CD4-positive, alpha-beta memory T cell (primary cell): ENCODE measurements at regions of chr15 and their contacts with region 1.

Region 1: DNA sequence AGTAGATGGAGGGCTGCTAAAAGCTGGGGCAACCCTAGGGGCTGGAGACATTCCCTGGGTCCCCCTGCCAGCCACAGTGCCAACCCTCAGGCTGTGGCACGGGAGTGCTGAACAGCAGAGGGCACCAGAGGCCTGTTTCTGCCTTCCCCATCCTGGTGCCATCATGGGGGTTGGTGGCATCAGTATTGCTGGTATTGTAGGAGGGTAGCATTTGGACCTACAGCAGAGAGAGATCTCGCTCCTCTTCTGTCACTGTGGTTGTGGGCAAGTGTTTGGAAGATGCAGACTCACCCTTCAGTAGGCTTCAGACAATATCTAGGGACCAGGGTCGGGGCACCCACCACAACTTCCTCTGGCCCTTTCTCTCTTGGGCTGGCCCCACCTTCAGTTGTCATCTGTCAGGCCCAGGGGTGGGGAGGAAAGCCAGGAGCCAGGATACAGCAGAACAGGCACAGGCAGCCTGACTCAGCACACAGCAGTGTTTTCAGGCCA is 123.5 kb downstream of the RPLP1 start:
- DNase-seq: peak; percentile 59 to 64 (median 61)
- H3K4me3 ChIP-seq: no peak overlapping the region
- H3K4me3 Mint-ChIP-seq: peak overlapping the region in 1 of 8 donors; percentile 37
- H3K27ac ChIP-seq: no peak overlapping the region
- H3K27ac Mint-ChIP-seq: peak overlapping the region in 2 of 7 donors; percentile 25 to 38
- H3K4me1 ChIP-seq: peaks cover 35% of the 10 kb centered on the region
- H3K4me1 Mint-ChIP-seq: peaks cover 18 to 41% (median 33%) of the 10 kb centered on the region in 4 donors
- H3K27me3 ChIP-seq: no peaks in the 10 kb centered on the region
- H3K27me3 Mint-ChIP-seq: peaks cover 0 to 1% of the 10 kb centered on the region in 2 donors

Region 2: DNA sequence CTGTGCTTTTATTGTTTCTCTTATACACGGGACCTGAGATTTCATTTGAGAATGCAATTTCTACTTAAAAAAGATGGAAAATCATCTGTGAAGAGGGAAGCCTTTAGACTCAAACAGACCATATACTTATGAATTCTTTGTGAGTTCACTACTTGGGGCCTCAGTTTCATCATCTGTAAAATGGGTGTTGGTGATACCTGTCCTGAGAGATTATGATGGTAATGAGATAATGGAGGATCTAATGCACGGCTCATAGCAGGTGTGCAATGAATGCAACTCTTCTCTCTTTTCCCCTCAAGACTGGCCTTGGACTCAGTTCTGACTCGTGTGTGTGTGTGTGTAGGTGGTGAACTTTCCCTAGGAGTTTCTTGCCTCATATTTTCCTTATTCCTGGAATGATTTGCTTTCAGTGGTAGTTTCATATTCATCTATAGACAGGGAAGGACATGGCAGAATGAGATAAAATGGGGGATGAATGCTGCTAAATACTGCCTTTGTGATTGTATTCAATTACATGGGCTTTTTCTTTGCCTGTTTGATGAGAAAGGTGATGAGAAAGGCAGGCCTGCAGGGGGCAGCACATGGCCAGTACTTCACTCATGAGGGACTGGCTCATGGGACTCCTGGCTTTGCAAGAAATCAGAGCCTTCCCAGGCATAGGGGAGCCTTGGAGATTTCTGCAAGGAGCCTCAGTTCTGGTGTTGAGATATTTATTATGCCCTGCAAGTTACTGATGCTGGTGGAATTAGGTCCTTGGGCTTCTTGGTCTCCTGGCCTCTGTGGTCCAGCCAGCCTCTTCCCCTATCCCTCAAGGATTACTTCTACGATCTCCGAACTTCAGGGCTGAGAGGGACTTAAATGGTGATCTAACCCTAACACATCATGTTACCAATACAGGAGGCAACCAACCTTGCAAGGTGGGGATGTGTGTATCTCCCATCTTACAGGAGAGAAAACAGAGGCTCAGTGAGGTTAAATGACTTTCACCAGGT is 52.8 kb before region 1 on chr15:
- CTCF ChIA-PET with region 1: no interaction called
- POLR2A ChIA-PET with region 1: no interaction called
- intact Hi-C with region 1: no loop called
- DNase-seq: peak; percentile 38 to 63 (median 53)
- H3K4me3 ChIP-seq: no peak overlapping the region
- H3K4me3 Mint-ChIP-seq: no peak overlapping the region
- H3K27ac ChIP-seq: no peak overlapping the region
- H3K27ac Mint-ChIP-seq: peak overlapping the region in 1 of 7 donors; percentile 33
- H3K4me1 ChIP-seq: no peaks in the 10 kb centered on the region
- H3K4me1 Mint-ChIP-seq: no peaks in the 10 kb centered on the region
- H3K27me3 ChIP-seq: no peaks in the 10 kb centered on the region
- H3K27me3 Mint-ChIP-seq: peaks cover 3 to 5% of the 10 kb centered on the region in 2 donors

Region 3: DNA sequence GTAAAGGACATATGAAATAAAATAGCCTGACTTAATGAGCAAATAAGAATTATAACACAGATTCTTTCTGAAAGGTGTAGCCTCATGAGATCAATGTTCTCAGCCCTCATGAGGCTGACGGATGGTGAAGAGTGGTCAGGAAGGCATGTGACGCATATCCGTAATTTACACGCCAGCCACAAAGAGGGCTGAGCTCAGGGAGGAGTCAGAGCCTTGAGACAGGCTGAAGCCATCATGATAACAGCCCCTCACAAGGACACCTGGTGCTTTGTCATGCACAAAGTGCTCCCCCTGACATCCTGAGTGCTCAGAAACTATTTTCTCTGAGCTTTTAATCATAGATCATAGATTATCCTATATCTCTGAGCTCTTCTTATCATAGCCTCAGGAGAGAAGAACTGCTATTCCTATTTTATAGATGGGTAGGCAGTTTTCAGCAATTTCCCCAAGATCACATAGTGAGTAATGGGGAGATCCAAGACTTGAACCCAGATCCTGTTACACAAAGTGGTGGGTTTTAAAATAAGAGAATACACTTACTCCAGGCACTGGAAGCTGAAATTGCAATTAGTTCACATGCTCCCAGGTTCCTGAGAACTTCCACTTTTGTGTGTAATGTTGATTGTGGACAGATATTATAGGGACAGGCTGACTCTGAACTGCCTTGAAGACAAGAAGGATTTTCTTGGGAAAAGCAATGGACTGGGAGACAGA is 143.6 kb after region 1 on chr15:
- CTCF ChIA-PET with region 1: interaction called, 10 read pairs
- POLR2A ChIA-PET with region 1: interaction called, 4 read pairs
- intact Hi-C with region 1: loop called (anchors 2 kb)
- DNase-seq: peak; percentile 68 to 89 (median 78)
- H3K4me3 ChIP-seq: no peak overlapping the region
- H3K4me3 Mint-ChIP-seq: peak overlapping the region in 7 of 8 donors; percentile 18 to 94 (median 51)
- H3K27ac ChIP-seq: peak overlapping the region; percentile 39
- H3K27ac Mint-ChIP-seq: peak overlapping the region; percentile 93 to 97 (median 95)
- H3K4me1 ChIP-seq: peaks cover 96% of the 10 kb centered on the region
- H3K4me1 Mint-ChIP-seq: peaks cover 62 to 92% (median 81%) of the 10 kb centered on the region in 4 donors
- H3K27me3 ChIP-seq: no peaks in the 10 kb centered on the region
- H3K27me3 Mint-ChIP-seq: peaks cover 0 to 1% of the 10 kb centered on the region in 2 donors

Region 4: GRCh38 chr15:70091726-70092463 is 515.8 kb after region 1 on chr15:
- CTCF ChIA-PET with region 1: interaction called, 7 read pairs
- POLR2A ChIA-PET with region 1: interaction called, 4 read pairs
- intact Hi-C with region 1: loop called (anchors 1 kb)
- DNase-seq: peak in 3 of 5 donors; percentile 16 to 55 (median 19)
- H3K4me3 ChIP-seq: no peak overlapping the region
- H3K4me3 Mint-ChIP-seq: peak overlapping the region in 6 of 8 donors; percentile 39 to 87 (median 74)
- H3K27ac ChIP-seq: no peak overlapping the region
- H3K27ac Mint-ChIP-seq: peak overlapping the region in 5 of 7 donors; percentile 6 to 68 (median 31)
- H3K4me1 ChIP-seq: peaks cover 79% of the 10 kb centered on the region
- H3K4me1 Mint-ChIP-seq: peaks cover 61 to 94% (median 78%) of the 10 kb centered on the region in 4 donors
- H3K27me3 ChIP-seq: no peaks in the 10 kb centered on the region
- H3K27me3 Mint-ChIP-seq: no peaks in the 10 kb centered on the region

Region 5: DNA sequence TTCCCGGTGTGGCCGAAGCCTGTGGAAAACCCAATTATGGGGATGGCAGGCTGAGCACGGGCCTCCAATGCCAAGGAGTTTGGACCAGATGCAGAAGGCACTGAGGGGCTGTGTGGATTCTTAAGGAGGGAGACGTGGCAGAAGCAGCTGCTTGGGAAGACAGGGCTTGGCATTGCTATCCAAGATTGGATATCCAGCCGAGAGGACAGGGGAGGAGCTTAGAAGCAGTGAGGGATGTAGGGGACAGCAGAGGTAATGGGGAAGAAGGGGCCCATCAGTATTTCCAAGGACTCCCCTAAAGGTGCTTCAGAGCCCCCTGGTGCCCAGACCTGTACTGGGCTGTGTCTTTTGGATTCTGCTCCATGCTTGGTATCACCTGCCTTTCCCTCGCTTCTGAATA is 634.4 kb after region 1 on chr15:
- CTCF ChIA-PET with region 1: interaction called, 4 read pairs
- POLR2A ChIA-PET with region 1: no interaction called
- intact Hi-C with region 1: loop called (anchors 5 kb)
- DNase-seq: no peak
- H3K4me3 ChIP-seq: no peak overlapping the region
- H3K4me3 Mint-ChIP-seq: no peak overlapping the region
- H3K27ac ChIP-seq: no peak overlapping the region
- H3K27ac Mint-ChIP-seq: no peak overlapping the region
- H3K4me1 ChIP-seq: no peaks in the 10 kb centered on the region
- H3K4me1 Mint-ChIP-seq: no peaks in the 10 kb centered on the region
- H3K27me3 ChIP-seq: no peaks in the 10 kb centered on the region
- H3K27me3 Mint-ChIP-seq: no peaks in the 10 kb centered on the region

Region 6: GRCh38 chr15:70512772-70513362 is 936.8 kb after region 1 on chr15:
- CTCF ChIA-PET with region 1: interaction called, 3 read pairs
- POLR2A ChIA-PET with region 1: no interaction called
- intact Hi-C with region 1: loop called (anchors 1 kb)
- DNase-seq: peak; percentile 55 to 67 (median 59)
- H3K4me3 ChIP-seq: no peak overlapping the region
- H3K4me3 Mint-ChIP-seq: no peak overlapping the region
- H3K27ac ChIP-seq: no peak overlapping the region
- H3K27ac Mint-ChIP-seq: peak overlapping the region in 1 of 7 donors; percentile 43
- H3K4me1 ChIP-seq: peaks cover 20% of the 10 kb centered on the region
- H3K4me1 Mint-ChIP-seq: peaks cover 9 to 28% (median 18%) of the 10 kb centered on the region in 4 donors
- H3K27me3 ChIP-seq: no peaks in the 10 kb centered on the region
- H3K27me3 Mint-ChIP-seq: no peaks in the 10 kb centered on the region